Activated CD4-positive, alpha-beta T cell treated with anti-CD3 and anti-CD28 coated beads, Interleukin-2, amount 10 ng/mL, durations not matched to agents 7 days and 5 days (primary cell): ENCODE measurements at regions of chr2 and their contacts with region 1.

Region 1: GRCh38 chr2:74458132-74458925 is at the start of gene WBP1:
- DNase-seq: peak; percentile 100
- H3K4me3 Mint-ChIP-seq: peak within 1 kb of the TSS; percentile 91
- H3K27ac Mint-ChIP-seq: peak within 1 kb of the TSS; percentile 98
- H3K4me1 Mint-ChIP-seq: peaks cover 62% of the 10 kb centered on the region
- H3K27me3 Mint-ChIP-seq: no peaks in the 10 kb centered on the region
- total RNA-seq, gene WBP1: 52.5 to 52.6 TPM

Region 2: GRCh38 chr2:74440378-74441169 is 17.8 kb before region 1 on chr2:
- CTCF ChIA-PET with region 1: interaction called, 10 read pairs
- POLR2A ChIA-PET with region 1: no interaction called
- DNase-seq: no peak
- H3K4me3 Mint-ChIP-seq: peak overlapping the region; percentile 36
- H3K27ac Mint-ChIP-seq: no peak overlapping the region
- H3K4me1 Mint-ChIP-seq: peaks cover 9% of the 10 kb centered on the region
- H3K27me3 Mint-ChIP-seq: peaks cover 46% of the 10 kb centered on the region

Region 3: GRCh38 chr2:74472086-74472944 is 14.0 kb after region 1 on chr2 and contains the start of gene MRPL53:
- CTCF ChIA-PET with region 1: interaction called, 19 read pairs
- POLR2A ChIA-PET with region 1: interaction called, 6 read pairs
- DNase-seq: peak; percentile 97
- H3K4me3 Mint-ChIP-seq: peak within 1 kb of the TSS; percentile 91
- H3K27ac Mint-ChIP-seq: peak within 1 kb of the TSS; percentile 98
- H3K4me1 Mint-ChIP-seq: peaks cover 34% of the 10 kb centered on the region
- H3K27me3 Mint-ChIP-seq: no peaks in the 10 kb centered on the region
- total RNA-seq, gene MRPL53: 72.5 to 83.1 TPM